Caco-2 (cell line): ENCODE measurements at regions of chr9 and their contacts with region 1.

Region 1: DNA sequence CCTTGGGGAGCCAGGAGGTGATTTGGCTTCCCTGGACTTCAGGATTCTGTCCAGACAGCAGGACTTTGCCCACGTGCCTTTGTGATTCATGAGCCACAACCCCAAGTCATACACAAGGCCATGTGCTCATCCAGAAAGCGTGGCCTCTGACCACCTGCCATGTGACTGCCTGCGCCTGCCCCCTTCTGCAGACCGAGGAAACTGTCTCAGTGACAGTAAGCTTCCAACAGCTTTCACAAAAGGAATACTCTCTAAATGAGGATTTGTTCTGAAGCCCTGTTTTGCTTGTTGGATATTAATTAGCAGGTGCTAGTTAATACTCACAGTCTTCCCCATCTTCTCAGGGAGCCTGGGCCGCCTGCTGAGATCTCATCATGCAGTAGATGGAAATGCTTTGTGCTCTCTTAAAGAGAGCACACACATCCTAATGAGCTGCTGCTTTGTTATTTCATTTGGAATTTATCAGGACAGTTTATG is 36.9 kb upstream of the ANGPTL2 start:
- DNase-seq: peak; percentile 81 to 90
- H3K4me3 ChIP-seq: no peak overlapping the region
- H3K4me3 Mint-ChIP-seq: peak overlapping the region; percentile 36
- H3K27ac Mint-ChIP-seq: peak overlapping the region; percentile 81
- H3K4me1 ChIP-seq: peaks cover 15% of the 10 kb centered on the region
- H3K4me1 Mint-ChIP-seq: peaks cover 16% of the 10 kb centered on the region
- H3K27me3 ChIP-seq: no peaks in the 10 kb centered on the region
- H3K27me3 Mint-ChIP-seq: no peaks in the 10 kb centered on the region
- CTCF ChIP-seq: peak; percentile 37 to 79

Region 2: DNA sequence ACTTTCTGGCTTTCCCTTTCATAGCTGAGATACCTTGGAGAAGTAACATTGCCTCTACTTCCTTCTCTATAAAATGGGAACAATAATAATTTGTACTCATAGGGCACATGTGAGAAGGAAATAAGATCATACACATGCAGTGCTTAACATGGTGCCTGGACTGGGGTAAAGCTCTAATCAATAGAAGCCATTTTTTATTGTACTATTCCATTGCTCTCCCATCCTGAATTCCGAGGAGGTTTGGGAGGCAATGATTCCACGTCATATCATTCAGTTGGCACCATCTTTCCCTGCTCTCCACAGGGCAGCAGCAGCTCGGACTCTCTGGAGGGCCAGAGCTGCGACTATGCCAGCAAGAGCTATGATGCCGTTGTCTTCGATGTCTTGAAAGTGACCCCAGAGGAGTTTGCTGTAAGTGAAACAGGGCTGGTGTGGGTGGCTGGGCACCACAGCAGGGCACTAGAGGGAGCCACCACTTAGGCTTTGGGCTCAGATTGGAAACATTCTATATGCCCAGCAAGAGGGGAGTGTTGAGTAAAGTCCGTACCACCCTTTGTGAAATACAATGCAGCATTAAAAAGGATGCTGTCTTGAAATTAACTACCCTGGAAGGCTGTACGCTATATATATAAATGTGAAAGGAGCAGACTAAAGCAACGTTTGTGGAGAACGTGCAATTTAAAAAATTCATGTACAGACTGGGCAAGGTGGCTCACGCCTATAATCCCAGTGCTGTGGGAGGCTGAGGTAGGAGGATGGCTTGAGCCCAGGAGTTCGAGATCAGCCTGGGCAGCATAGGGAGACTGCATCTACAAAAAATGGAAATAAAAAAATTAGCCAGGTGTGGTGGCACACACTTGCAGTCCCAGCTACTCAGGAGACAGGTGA is 193.6 kb before region 1 on chr9:
- CTCF ChIA-PET with region 1: interaction called, 3 read pairs
- POLR2A ChIA-PET with region 1: no interaction called
- intact Hi-C with region 1: loop called (anchors 1 kb)
- DNase-seq: peak in 1 of 2 experiments; percentile 65
- H3K4me3 ChIP-seq: no peak overlapping the region
- H3K4me3 Mint-ChIP-seq: no peak overlapping the region
- H3K27ac Mint-ChIP-seq: no peak overlapping the region
- H3K4me1 ChIP-seq: no peaks in the 10 kb centered on the region; the same call in 1 of the 2 replicates
- H3K4me1 Mint-ChIP-seq: peaks cover 10% of the 10 kb centered on the region
- H3K27me3 ChIP-seq: no peaks in the 10 kb centered on the region
- H3K27me3 Mint-ChIP-seq: no peaks in the 10 kb centered on the region
- CTCF ChIP-seq: peak; percentile 67 to 79

Region 3: DNA sequence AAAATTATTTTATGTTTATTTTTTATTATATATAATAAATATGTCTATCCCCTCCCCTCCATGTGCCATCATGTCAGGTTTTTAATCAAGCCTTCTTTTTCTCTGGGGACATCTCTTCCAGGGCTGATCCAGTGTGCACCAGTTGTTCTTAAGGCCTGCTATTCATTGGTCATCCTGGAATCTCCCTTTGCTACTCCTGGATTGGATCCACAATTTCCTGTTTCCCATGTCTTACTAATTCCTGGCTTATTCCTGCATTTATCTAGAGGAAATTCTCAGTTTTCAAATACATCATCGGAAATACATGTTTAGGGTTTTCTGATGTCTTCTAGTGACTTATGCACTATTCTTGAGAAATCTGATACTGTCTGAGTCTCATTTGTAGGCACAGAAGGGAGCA is 93.8 kb before region 1 on chr9:
- CTCF ChIA-PET with region 1: interaction called, 7 read pairs
- POLR2A ChIA-PET with region 1: no interaction called
- intact Hi-C with region 1: loop called (anchors 2 kb)
- DNase-seq: no peak
- H3K4me3 ChIP-seq: no peak overlapping the region
- H3K4me3 Mint-ChIP-seq: no peak overlapping the region
- H3K27ac Mint-ChIP-seq: peak overlapping the region; percentile 95
- H3K4me1 ChIP-seq: peaks cover 65% of the 10 kb centered on the region
- H3K4me1 Mint-ChIP-seq: peaks cover 32% of the 10 kb centered on the region
- H3K27me3 ChIP-seq: no peaks in the 10 kb centered on the region
- H3K27me3 Mint-ChIP-seq: no peaks in the 10 kb centered on the region
- CTCF ChIP-seq: no peak

Region 4: GRCh38 chr9:127074561-127075548 is 84.5 kb before region 1 on chr9:
- CTCF ChIA-PET with region 1: no interaction called
- POLR2A ChIA-PET with region 1: no interaction called
- intact Hi-C with region 1: loop called (anchors 2 kb)
- DNase-seq: peak in 1 of 2 experiments; percentile 17
- H3K4me3 ChIP-seq: no peak overlapping the region
- H3K4me3 Mint-ChIP-seq: no peak overlapping the region
- H3K27ac Mint-ChIP-seq: peak overlapping the region; percentile 73
- H3K4me1 ChIP-seq: peaks cover 51% of the 10 kb centered on the region
- H3K4me1 Mint-ChIP-seq: peaks cover 42% of the 10 kb centered on the region
- H3K27me3 ChIP-seq: no peaks in the 10 kb centered on the region
- H3K27me3 Mint-ChIP-seq: no peaks in the 10 kb centered on the region
- CTCF ChIP-seq: no peak

Region 5: DNA sequence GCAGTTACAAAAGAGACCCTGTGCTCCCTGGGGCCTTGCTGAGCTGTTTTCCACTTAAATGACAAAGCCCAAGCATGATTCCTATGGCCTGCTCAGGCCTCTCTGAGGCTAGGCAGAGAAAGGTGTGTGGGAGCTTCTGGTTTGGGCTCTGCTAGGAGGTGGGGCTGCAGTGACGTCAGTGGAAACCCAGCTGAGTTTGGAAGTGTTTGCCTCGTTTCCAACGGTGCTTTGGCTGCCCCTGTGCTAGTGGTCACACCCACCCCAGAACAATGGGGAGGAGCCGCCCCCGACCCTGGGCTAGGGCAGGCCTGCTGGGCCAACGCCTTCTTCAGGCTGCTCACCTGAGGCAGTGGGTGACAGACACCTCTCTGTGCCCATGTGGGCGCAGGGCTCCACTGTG is 47.3 kb before region 1 on chr9:
- CTCF ChIA-PET with region 1: no interaction called
- POLR2A ChIA-PET with region 1: no interaction called
- intact Hi-C with region 1: no loop called
- DNase-seq: no peak
- H3K4me3 ChIP-seq: no peak overlapping the region
- H3K4me3 Mint-ChIP-seq: no peak overlapping the region
- H3K27ac Mint-ChIP-seq: no peak overlapping the region
- H3K4me1 ChIP-seq: peaks cover 8% of the 10 kb centered on the region
- H3K4me1 Mint-ChIP-seq: peaks cover 17% of the 10 kb centered on the region
- H3K27me3 ChIP-seq: no peaks in the 10 kb centered on the region
- H3K27me3 Mint-ChIP-seq: no peaks in the 10 kb centered on the region
- CTCF ChIP-seq: no peak

Region 6: DNA sequence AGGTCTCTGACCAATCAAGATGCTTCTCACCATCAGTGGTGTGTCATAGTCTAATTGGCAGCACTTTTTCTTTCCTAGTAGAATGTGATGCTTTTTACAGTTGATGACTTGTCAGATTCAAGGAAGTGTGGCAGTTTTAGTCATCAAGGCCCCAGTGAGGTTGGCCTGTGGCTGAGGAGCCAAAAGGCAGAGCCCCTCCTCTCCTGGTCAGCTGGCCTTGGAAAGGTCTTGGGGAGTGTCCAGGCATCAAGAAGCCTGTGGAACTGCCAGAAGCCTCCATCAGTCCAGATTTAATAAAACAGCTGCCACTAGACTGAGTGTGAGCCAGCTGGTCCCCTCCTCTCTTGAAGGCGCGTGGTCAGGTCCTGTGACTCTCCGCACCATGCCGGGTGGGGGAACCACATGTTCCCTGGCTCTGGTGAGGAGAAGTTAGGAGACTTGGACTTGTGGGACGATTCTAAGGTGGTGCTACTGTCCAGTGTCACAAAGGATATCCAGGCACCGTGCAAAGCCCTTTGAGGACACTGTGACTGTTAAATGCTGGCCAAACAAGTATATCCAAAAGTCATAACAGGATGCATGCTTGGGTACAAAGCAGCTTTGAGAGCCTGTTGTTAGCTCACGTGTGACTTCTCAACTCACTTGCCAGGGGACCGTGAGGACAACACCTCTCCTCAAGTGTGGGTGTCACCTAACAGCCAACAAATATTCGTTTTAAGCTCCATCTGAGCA is 30.9 kb before region 1 on chr9:
- CTCF ChIA-PET with region 1: no interaction called
- POLR2A ChIA-PET with region 1: no interaction called
- intact Hi-C with region 1: loop called (anchors 2 kb)
- DNase-seq: no peak
- H3K4me3 ChIP-seq: no peak overlapping the region
- H3K4me3 Mint-ChIP-seq: no peak overlapping the region
- H3K27ac Mint-ChIP-seq: peak overlapping the region; percentile 33
- H3K4me1 ChIP-seq: peaks cover 47% of the 10 kb centered on the region
- H3K4me1 Mint-ChIP-seq: peaks cover 29% of the 10 kb centered on the region
- H3K27me3 ChIP-seq: no peaks in the 10 kb centered on the region
- H3K27me3 Mint-ChIP-seq: no peaks in the 10 kb centered on the region
- CTCF ChIP-seq: no peak